ENCODE measurements at regions of chr2 and their contacts with region 1.

Region 1: GRCh38 chr2:68121873-68122679 is 35.6 kb upstream of the PNO1 start:
- DNase-seq: peak; percentile 81 to 97 (median 91)
- H3K4me3 ChIP-seq: no peak overlapping the region
- H3K27ac ChIP-seq: no peak overlapping the region
- H3K4me1 ChIP-seq: peaks cover 0 to 8% of the 10 kb centered on the region in 2 donors
- H3K27me3 ChIP-seq: no peaks in the 10 kb centered on the region
- CTCF ChIP-seq: peak; percentile 94 to 98 (median 97)
- POLR2A ChIP-seq: no peak

Region 2: GRCh38 chr2:68244456-68244855 is 122.4 kb after region 1 on chr2:
- intact Hi-C with region 1: loop called in 1 of 2 experiments (anchors 10 kb)
- DNase-seq: no peak
- H3K4me3 ChIP-seq: no peak overlapping the region
- H3K27ac ChIP-seq: peak overlapping the region in 1 of 5 donors; percentile 31
- H3K4me1 ChIP-seq: peaks cover 25 to 90% of the 10 kb centered on the region in 2 donors
- H3K27me3 ChIP-seq: no peaks in the 10 kb centered on the region
- CTCF ChIP-seq: peak in 5 of 6 experiments; percentile 24 to 52 (median 33)
- POLR2A ChIP-seq: no peak

Region 3: GRCh38 chr2:68251187-68251854 is 129.2 kb after region 1 on chr2:
- intact Hi-C with region 1: loop called (anchors 10 kb)
- DNase-seq: peak; percentile 66 to 89 (median 76)
- H3K4me3 ChIP-seq: peak overlapping the region; percentile 44 to 96 (median 86)
- H3K27ac ChIP-seq: peak overlapping the region; percentile 85 to 100 (median 96)
- H3K4me1 ChIP-seq: peaks cover 26 to 55% of the 10 kb centered on the region in 2 donors
- H3K27me3 ChIP-seq: no peaks in the 10 kb centered on the region
- CTCF ChIP-seq: peak; percentile 60 to 88 (median 76)
- POLR2A ChIP-seq: peak; percentile 20 to 65

Region 4: DNA sequence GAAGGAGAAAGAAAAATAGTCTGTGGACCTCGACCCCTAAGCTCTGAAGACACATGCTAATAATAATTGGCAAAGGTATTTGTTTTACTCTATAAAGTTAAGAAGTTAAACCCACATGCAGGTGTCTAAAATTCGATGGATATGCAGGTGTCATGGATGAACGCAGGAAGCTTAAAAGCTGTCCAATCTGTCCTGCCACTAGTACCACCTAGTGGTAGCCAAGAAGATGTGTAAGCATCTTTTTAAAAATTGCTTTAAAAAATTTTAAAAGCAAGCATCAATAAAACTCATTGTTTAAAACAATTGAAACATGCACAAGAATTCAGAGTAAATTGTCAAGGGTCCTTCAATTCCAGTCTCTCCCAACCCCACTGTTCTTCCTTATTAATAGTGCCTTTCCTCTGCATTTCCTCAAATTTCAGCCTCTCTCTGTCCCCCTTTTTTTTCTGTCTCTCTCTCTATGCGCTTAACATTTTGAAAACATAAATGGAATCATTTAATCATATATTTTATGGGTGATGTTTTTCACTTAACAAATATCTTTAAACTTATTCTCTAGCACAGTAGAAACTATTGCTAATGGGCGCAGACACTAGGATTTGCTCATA is 160.8 kb after region 1 on chr2:
- intact Hi-C with region 1: loop called in 1 of 2 experiments (anchors 2 kb)
- DNase-seq: peak in 1 of 7 donors; percentile 7
- H3K4me3 ChIP-seq: no peak overlapping the region
- H3K27ac ChIP-seq: no peak overlapping the region
- H3K4me1 ChIP-seq: peaks cover 0 to 20% of the 10 kb centered on the region in 2 donors
- H3K27me3 ChIP-seq: no peaks in the 10 kb centered on the region
- CTCF ChIP-seq: peak; percentile 64 to 87 (median 70)
- POLR2A ChIP-seq: no peak

Region 5: GRCh38 chr2:68411397-68412126 is 289.5 kb after region 1 on chr2:
- intact Hi-C with region 1: no loop called
- DNase-seq: no peak
- H3K4me3 ChIP-seq: no peak overlapping the region
- H3K27ac ChIP-seq: no peak overlapping the region
- H3K4me1 ChIP-seq: no peaks in the 10 kb centered on the region
- H3K27me3 ChIP-seq: no peaks in the 10 kb centered on the region
- CTCF ChIP-seq: no peak
- POLR2A ChIP-seq: no peak

Region 6: GRCh38 chr2:68441179-68441993 is 319.3 kb after region 1 on chr2:
- intact Hi-C with region 1: loop called in 1 of 2 experiments (anchors 5 kb)
- DNase-seq: peak; percentile 73 to 94 (median 82)
- H3K4me3 ChIP-seq: no peak overlapping the region
- H3K27ac ChIP-seq: no peak overlapping the region
- H3K4me1 ChIP-seq: peaks cover 0 to 4% of the 10 kb centered on the region in 2 donors
- H3K27me3 ChIP-seq: no peaks in the 10 kb centered on the region
- CTCF ChIP-seq: peak; percentile 86 to 91 (median 91)
- POLR2A ChIP-seq: no peak